HEK293T (cell line): ENCODE measurements at regions of chr11 and their contacts with region 1.

Region 1: GRCh38 chr11:96389720-96390487 is at the starts of genes CCDC82 and JRKL:
- DNase-seq: peak; percentile 96

Region 2: DNA sequence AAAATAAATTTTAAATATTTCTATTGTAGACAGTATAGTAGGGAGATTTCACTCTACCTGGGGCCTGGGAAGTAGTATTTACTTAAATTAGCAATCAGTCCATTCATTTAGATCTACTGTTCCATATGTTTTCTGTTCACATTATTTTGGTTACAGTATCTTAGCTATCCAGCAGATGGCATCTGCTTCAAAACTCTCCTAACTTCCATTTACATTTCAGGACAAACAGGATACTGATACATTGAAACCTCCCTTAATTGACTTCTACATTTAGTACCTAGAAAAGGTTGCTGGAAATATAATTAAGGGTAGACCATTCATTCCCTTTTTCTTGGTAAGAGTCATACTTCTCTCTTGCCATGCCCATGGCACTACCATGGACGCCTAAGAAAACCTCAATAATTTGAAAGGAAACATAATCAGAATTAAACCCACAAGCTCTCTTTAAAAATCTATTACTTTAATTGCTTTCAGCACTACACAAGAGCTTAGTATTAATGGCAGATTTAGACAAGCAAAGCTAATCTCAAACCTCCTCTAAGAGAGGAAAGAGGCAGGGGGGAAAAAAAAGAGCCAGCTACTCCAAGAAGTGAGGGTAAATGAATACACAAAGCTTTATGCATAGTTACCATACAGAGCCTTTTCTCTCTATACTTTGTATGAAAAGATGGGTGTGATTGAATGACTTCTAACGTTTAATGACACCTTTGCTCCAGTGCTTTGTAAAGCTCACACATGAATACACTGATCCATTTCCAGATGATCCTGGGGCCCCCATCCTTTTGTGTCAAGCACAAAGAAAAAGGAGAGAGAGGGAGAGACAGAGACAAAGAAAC is 334.8 kb before region 1 on chr11:
- CTCF ChIA-PET with region 1: interaction called, 11 read pairs
- POLR2A ChIA-PET with region 1: no interaction called
- DNase-seq: peak; percentile 22

Region 3: GRCh38 chr11:96314326-96315020 is 75.4 kb before region 1 on chr11:
- CTCF ChIA-PET with region 1: no interaction called
- POLR2A ChIA-PET with region 1: no interaction called
- DNase-seq: no peak